Gastrocnemius medialis (tissue), 4 donors: ENCODE measurements at regions of chr18 and their contacts with region 1.

Region 1: DNA sequence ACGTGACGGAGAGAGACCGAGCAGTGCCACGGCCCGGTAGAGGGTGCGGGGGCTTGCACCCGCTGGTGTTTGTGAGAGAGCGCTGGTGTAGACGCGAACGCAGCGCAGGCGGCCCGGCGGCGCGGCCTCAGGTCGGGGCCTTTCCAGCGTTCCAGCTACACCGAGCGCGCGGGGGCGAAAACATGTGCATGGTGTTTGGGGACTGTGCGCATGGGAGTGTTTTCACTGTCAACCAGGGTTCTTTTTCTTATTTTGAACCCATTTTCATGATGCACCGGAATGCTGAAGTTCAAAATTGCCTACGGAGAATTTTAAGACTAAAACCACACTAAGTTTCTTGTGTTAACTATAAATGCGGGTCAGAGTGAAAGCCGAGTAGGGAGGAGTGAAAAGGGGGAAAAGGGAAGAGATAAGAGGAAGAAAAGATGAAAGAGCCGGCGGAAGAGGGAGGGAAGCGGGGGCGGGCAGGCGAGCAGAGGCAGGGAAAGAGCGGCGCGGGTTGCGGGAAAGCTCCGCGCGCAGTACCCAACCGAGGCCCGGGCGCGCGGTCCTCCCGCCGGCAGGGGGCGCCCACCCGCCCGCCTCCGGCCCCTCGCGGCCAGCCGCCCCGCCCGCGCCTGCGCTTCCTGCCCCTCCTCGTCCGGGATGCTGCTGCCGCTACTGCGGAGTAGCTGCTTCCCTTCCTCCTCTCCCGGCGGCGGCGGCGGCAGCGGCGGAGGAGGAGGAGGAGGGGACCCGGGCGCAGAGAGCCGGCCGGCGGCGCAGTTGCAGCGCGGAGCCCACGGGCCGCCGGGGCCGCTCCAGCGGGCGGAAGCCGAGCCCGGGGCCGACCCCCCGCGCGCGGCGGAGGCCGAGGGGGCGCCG is at the start of gene RAB12:
- DNase-seq: peak; percentile 86
- ATAC-seq: peak; percentile 71 to 78
- H3K4me3 ChIP-seq: peak within 1 kb of the TSS; percentile 84 to 98 (median 93)
- H3K27ac ChIP-seq: peak within 1 kb of the TSS; percentile 90 to 97 (median 94)
- H3K4me1 ChIP-seq: peaks cover 45 to 51% of the 10 kb centered on the region in 2 donors
- H3K27me3 ChIP-seq: no peaks in the 10 kb centered on the region
- CTCF ChIP-seq: peak; percentile 38 to 98 (median 97)
- POLR2A ChIP-seq: peak; percentile 84 to 89
- total RNA-seq, gene RAB12: 152 to 243 (median 213) TPM

Region 2: GRCh38 chr18:6741232-6741663 is 1867.8 kb before region 1 on chr18:
- in situ Hi-C with region 1: no loop called
- intact Hi-C with region 1: loop called (anchors 10 kb)
- DNase-seq: peak; percentile 40 to 61
- ATAC-seq: peak; percentile 94 to 96
- H3K4me3 ChIP-seq: no peak overlapping the region
- H3K27ac ChIP-seq: peak overlapping the region; percentile 80 to 85 (median 82)
- H3K4me1 ChIP-seq: peaks cover 24 to 72% of the 10 kb centered on the region in 2 donors
- H3K27me3 ChIP-seq: no peaks in the 10 kb centered on the region
- CTCF ChIP-seq: no peak
- POLR2A ChIP-seq: no peak

Region 3: DNA sequence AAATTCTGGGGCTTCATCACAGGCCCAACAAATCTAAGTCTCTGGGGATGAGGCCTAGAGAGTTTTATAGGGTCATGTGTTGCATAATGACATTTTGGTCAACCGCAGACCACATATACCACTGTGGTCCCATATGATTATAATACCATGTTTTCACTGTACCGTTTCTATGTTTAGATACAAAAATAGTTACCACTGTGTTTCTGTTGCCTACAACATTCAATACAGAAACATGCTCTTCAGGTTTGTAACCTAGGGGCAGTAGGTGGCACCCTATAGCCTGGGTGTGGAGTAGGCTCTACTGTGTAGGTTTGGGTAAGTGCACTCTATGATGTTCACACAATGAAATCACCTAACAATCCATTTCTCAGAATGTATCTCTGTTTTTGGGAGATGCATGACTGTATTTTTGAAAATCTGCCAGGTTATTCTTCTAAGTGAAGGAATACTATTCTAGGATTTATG is 556.8 kb before region 1 on chr18:
- in situ Hi-C with region 1: no loop called
- intact Hi-C with region 1: loop called (anchors 10 kb)
- DNase-seq: no peak
- ATAC-seq: peak; percentile 33 to 60
- H3K4me3 ChIP-seq: no peak overlapping the region
- H3K27ac ChIP-seq: no peak overlapping the region
- H3K4me1 ChIP-seq: peaks cover 22 to 30% of the 10 kb centered on the region in 2 donors
- H3K27me3 ChIP-seq: no peaks in the 10 kb centered on the region
- CTCF ChIP-seq: no peak
- POLR2A ChIP-seq: no peak

Region 4: GRCh38 chr18:8478166-8478967 is 130.7 kb before region 1 on chr18:
- in situ Hi-C with region 1: no loop called
- intact Hi-C with region 1: loop called (anchors 5 kb)
- DNase-seq: peak; percentile 29 to 36
- ATAC-seq: peak; percentile 67 to 84
- H3K4me3 ChIP-seq: no peak overlapping the region
- H3K27ac ChIP-seq: no peak overlapping the region
- H3K4me1 ChIP-seq: no peaks in the 10 kb centered on the region
- H3K27me3 ChIP-seq: no peaks in the 10 kb centered on the region
- CTCF ChIP-seq: peak; percentile 50 to 83 (median 76)
- POLR2A ChIP-seq: no peak

Region 5: DNA sequence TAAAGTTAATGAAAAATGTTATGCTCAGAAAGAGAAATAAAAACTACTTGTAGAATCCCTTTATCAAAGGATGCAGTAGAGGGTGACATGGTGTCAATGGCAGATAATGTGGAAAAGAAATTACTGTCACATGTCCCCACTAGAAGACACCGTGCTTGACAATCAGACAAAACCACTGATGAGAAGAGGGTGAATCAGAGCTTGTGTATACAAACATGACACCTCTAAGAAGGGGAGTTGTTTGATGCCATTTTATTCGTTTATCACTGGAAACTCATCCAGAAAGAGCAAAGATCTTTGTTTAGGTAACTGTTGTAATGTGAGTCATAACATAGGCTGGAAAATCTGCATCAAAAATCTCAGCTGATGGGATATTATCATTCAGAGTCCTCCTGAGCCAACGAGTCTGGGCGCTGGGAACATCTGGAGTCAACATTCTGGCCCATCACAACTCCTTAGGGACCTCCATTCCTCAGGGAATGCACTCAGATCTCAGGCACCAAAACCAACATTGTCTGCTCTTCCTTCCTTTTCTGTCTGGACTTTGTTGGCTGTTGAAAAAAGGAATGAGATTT is 49.3 kb before region 1 on chr18:
- in situ Hi-C with region 1: no loop called
- intact Hi-C with region 1: no loop called
- DNase-seq: no peak
- ATAC-seq: no peak
- H3K4me3 ChIP-seq: no peak overlapping the region
- H3K27ac ChIP-seq: no peak overlapping the region
- H3K4me1 ChIP-seq: peaks cover 10 to 13% of the 10 kb centered on the region in 2 donors
- H3K27me3 ChIP-seq: no peaks in the 10 kb centered on the region
- CTCF ChIP-seq: no peak
- POLR2A ChIP-seq: no peak

Region 6: GRCh38 chr18:8623549-8624106 is 14.6 kb after region 1 on chr18:
- in situ Hi-C with region 1: no loop called
- intact Hi-C with region 1: loop called (anchors 2 kb)
- DNase-seq: peak; percentile 71 to 78
- ATAC-seq: peak; percentile 83 to 88
- H3K4me3 ChIP-seq: peak overlapping the region; percentile 13 to 29 (median 24)
- H3K27ac ChIP-seq: peak overlapping the region; percentile 83 to 90 (median 88)
- H3K4me1 ChIP-seq: peaks cover 94 to 96% of the 10 kb centered on the region in 2 donors
- H3K27me3 ChIP-seq: no peaks in the 10 kb centered on the region
- CTCF ChIP-seq: no peak
- POLR2A ChIP-seq: peak; percentile 88 to 98

Region 7: GRCh38 chr18:9136315-9137155 is 527.5 kb after region 1 on chr18 and contains the start of gene ANKRD12:
- in situ Hi-C with region 1: no loop called
- intact Hi-C with region 1: loop called (anchors 5 kb)
- DNase-seq: peak; percentile 96 to 97
- ATAC-seq: peak; percentile 72 to 75
- H3K4me3 ChIP-seq: peak within 1 kb of the TSS; percentile 83 to 89 (median 86)
- H3K27ac ChIP-seq: peak within 1 kb of the TSS; percentile 97 to 98 (median 98)
- H3K4me1 ChIP-seq: peaks cover 58 to 64% of the 10 kb centered on the region in 2 donors
- H3K27me3 ChIP-seq: no peaks in the 10 kb centered on the region
- CTCF ChIP-seq: peak in 1 of 5 experiments; percentile 14
- POLR2A ChIP-seq: peak; percentile 93 to 94
- total RNA-seq, gene ANKRD12: 26.9 to 40.1 (median 36.7) TPM